ENCODE measurements at regions of chr3 and their contacts with region 1.

Region 1: DNA sequence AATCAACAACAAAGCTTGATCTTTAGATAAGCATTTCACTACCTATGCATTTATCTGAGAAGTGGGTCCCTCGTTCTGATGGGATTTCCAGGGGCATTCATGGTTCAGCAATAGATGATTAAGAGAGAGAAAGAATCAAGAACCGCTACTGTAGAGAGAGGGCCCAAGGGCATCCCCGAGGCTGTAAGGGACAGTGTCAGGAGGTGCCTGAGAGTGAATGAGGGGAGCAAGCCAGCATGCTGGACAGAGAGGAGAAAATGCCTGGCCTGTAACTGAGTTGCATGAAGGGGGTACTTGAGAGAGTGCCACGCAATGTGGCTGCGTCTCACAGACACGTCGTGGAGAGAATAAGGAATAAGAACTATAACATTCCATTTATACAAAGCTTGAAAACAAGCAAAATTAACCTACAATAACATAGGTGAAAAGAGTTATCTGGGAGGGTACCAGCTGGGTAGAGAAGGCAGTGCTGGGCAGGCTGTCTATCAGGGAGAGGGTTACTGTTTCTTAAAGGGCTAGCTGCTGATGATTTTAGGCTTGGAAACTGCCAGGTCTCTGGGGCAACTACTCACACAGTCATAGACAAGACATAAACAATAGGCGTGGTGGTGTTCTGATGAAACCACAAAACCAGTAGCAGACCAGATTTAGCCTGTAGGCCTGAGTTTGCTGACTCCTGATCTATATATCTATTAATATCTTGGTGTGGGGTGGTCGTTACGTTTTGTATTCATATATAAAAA is 374.6 kb upstream of the CFAP20DC start:
- DNase-seq: peak; percentile 89
- H3K4me3 Mint-ChIP-seq: no peak overlapping the region
- H3K27ac Mint-ChIP-seq: peak overlapping the region; percentile 95
- H3K4me1 Mint-ChIP-seq: peaks cover 47% of the 10 kb centered on the region
- H3K27me3 Mint-ChIP-seq: no peaks in the 10 kb centered on the region
- CTCF ChIP-seq: no peak

Region 2: DNA sequence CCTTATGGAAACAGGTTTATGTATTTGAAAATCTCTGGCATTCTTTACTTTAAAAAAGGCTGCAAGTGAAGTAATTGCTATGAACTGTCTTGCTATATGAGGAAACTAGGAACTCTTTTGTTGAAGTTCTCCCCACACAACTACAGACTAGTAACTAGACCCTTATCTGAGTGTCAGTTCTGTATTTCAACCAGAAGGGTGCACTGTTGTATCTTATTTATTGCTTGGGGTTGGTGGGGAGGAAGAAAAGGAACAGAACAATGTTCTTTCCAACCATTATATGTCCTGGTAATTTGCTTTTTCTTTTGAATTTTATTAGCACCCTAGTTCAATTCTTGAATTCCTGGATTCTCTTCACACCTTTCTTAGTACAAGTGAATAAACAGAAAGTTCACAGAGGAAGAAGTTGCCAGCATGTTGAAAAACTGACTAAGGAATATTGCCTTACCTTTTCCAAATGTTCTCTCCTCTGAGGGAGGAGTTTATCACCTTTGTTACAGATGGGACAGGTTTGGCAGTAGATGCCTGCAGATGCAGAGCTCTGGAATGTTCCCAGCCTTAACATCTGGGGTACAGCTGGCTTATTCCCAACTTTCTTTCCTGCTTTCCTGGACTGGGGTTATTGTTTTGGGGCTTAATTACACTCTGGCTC is 212.2 kb before region 1 on chr3:
- CTCF ChIA-PET with region 1: interaction called, 4 read pairs
- POLR2A ChIA-PET with region 1: no interaction called
- intact Hi-C with region 1: loop called (anchors 10 kb)
- DNase-seq: peak; percentile 50
- H3K4me3 Mint-ChIP-seq: no peak overlapping the region
- H3K27ac Mint-ChIP-seq: no peak overlapping the region
- H3K4me1 Mint-ChIP-seq: peaks cover 5% of the 10 kb centered on the region
- H3K27me3 Mint-ChIP-seq: no peaks in the 10 kb centered on the region
- CTCF ChIP-seq: peak; percentile 70

Region 3: DNA sequence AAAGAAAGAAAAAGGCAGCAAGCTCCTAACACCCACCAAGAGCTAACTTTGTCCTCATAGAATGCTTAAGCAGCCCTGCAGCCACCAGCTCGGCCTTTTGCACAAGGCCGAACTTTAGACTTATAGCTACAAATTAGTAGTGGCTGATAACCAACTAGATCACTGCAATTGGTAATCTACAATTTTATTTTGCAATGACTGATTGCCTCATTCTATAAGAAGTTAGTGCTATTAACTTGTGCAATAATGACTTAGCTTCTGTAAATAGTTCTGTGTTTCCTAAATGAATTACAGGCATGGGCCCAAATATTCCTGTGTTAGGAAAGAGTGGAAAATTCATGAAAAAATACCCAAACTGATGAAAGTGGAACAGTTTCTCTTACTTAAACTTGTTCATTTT is 89.9 kb before region 1 on chr3:
- CTCF ChIA-PET with region 1: no interaction called
- POLR2A ChIA-PET with region 1: interaction called, 13 read pairs
- intact Hi-C with region 1: no loop called
- DNase-seq: peak; percentile 59
- H3K4me3 Mint-ChIP-seq: no peak overlapping the region
- H3K27ac Mint-ChIP-seq: peak overlapping the region; percentile 89
- H3K4me1 Mint-ChIP-seq: peaks cover 28% of the 10 kb centered on the region
- H3K27me3 Mint-ChIP-seq: no peaks in the 10 kb centered on the region
- CTCF ChIP-seq: no peak

Region 4: GRCh38 chr3:59502806-59503205 is 78.4 kb after region 1 on chr3:
- CTCF ChIA-PET with region 1: no interaction called
- POLR2A ChIA-PET with region 1: no interaction called
- intact Hi-C with region 1: loop called (anchors 2 kb)
- DNase-seq: peak; percentile 66
- H3K4me3 Mint-ChIP-seq: no peak overlapping the region
- H3K27ac Mint-ChIP-seq: no peak overlapping the region
- H3K4me1 Mint-ChIP-seq: no peaks in the 10 kb centered on the region
- H3K27me3 Mint-ChIP-seq: no peaks in the 10 kb centered on the region
- CTCF ChIP-seq: no peak

Region 5: GRCh38 chr3:59559721-59560435 is 135.4 kb after region 1 on chr3:
- CTCF ChIA-PET with region 1: no interaction called
- POLR2A ChIA-PET with region 1: interaction called, 5 read pairs
- intact Hi-C with region 1: loop called (anchors 5 kb)
- DNase-seq: peak; percentile 98
- H3K4me3 Mint-ChIP-seq: no peak overlapping the region
- H3K27ac Mint-ChIP-seq: peak overlapping the region; percentile 65
- H3K4me1 Mint-ChIP-seq: peaks cover 45% of the 10 kb centered on the region
- H3K27me3 Mint-ChIP-seq: no peaks in the 10 kb centered on the region
- CTCF ChIP-seq: no peak

Region 6: DNA sequence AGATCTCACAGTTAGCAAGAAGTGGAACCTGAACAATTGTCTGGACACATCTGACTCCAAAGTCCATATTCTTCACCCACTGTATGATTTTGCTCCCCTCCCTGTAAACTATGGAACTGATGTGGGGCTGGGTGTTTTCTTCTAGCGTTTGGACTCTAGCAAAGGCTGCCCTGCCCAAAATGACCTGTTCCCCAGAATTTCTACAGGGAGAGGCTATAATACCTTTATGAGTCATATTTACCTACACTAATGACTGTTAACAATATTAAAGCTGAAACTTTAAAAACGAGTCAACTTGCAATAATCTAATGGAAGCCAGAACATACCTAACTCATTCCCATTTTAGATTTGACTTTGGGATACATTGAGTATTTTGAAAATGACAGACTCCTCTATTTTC is 156.6 kb after region 1 on chr3:
- CTCF ChIA-PET with region 1: no interaction called
- POLR2A ChIA-PET with region 1: no interaction called
- intact Hi-C with region 1: no loop called
- DNase-seq: no peak
- H3K4me3 Mint-ChIP-seq: no peak overlapping the region
- H3K27ac Mint-ChIP-seq: no peak overlapping the region
- H3K4me1 Mint-ChIP-seq: peaks cover 14% of the 10 kb centered on the region
- H3K27me3 Mint-ChIP-seq: no peaks in the 10 kb centered on the region
- CTCF ChIP-seq: no peak

Measured in MCF 10A (cell line).